Right ventricle myocardium inferior (tissue), 1 donor: ENCODE measurements at regions of chr5 and their contacts with region 1.

Region 1: GRCh38 chr5:103232393-103232999 is 26.1 kb upstream of the MACIR start:
- DNase-seq: no peak
- ATAC-seq: no peak

Region 2: GRCh38 chr5:103075442-103075841 is 157.1 kb before region 1 on chr5:
- intact Hi-C with region 1: no loop called
- DNase-seq: no peak
- ATAC-seq: no peak

Region 3: DNA sequence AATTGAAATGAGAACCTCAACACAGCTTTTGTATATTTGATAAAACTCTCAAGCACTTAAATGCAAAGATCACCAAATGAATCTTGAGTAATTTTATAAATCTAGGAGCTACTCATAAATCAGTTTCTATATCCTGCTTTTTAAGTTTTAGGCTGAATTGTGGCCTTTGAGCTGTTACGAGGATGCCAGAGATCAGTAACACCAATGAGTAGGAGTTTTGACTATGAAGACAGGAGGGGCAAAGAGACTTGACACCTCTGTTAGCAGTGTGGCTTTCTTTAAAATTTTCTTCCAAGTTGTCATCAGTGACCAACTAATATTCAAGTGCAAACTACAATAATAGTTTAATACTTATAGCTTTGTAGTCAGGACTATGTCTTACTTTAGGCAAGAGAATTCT is 99.8 kb before region 1 on chr5:
- intact Hi-C with region 1: no loop called
- DNase-seq: no peak
- ATAC-seq: no peak

Region 4: DNA sequence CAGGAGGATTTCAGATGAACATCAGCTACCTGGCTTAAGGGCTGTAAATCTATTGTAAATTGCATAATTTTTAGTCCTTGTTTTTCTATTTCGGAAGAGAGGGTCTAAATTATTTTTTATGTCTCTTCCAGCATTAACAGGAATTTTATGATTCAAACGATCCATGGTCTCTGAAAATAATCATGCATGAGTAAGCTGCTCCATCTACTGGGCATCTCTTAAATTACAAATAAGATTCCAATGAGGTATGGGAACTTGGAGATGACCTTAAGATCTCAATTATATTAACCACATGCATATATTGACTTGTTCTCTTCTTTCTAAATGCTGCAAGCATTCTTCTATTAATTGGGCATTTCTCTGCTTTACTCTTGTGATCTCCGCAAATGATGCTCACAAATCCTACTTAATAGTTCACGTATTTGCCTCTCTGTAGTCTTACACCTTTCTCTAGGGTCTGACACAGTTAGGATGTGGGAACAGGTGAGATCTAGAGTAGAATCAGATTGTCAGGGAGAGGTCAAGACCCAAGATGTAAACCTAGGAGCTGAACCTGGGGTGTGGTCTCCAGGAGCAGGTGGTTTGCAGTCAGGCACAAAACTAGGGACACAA is 243.2 kb after region 1 on chr5:
- intact Hi-C with region 1: loop called (anchors 1 kb)
- DNase-seq: no peak
- ATAC-seq: no peak